ENCODE measurements at regions of chr19 and their contacts with region 1.

Region 1: GRCh38 chr19:37370880-37371661 is at the start of gene ZNF527:
- DNase-seq: peak; percentile 98
- H3K4me3 Mint-ChIP-seq: peak within 1 kb of the TSS; percentile 93
- H3K27ac Mint-ChIP-seq: peak within 1 kb of the TSS; percentile 88
- H3K4me1 Mint-ChIP-seq: peaks cover 11% of the 10 kb centered on the region
- H3K27me3 Mint-ChIP-seq: no peaks in the 10 kb centered on the region
- total RNA-seq, gene ZNF527: 3.8 to 4.4 TPM

Region 2: GRCh38 chr19:36973021-36973843 is 397.8 kb before region 1 on chr19:
- CTCF ChIA-PET with region 1: no interaction called
- POLR2A ChIA-PET with region 1: no interaction called
- intact Hi-C with region 1: loop called (anchors 2 kb)
- DNase-seq: peak; percentile 91
- H3K4me3 Mint-ChIP-seq: peak overlapping the region; percentile 89
- H3K27ac Mint-ChIP-seq: peak overlapping the region; percentile 95
- H3K4me1 Mint-ChIP-seq: peaks cover 7% of the 10 kb centered on the region
- H3K27me3 Mint-ChIP-seq: no peaks in the 10 kb centered on the region

Region 3: DNA sequence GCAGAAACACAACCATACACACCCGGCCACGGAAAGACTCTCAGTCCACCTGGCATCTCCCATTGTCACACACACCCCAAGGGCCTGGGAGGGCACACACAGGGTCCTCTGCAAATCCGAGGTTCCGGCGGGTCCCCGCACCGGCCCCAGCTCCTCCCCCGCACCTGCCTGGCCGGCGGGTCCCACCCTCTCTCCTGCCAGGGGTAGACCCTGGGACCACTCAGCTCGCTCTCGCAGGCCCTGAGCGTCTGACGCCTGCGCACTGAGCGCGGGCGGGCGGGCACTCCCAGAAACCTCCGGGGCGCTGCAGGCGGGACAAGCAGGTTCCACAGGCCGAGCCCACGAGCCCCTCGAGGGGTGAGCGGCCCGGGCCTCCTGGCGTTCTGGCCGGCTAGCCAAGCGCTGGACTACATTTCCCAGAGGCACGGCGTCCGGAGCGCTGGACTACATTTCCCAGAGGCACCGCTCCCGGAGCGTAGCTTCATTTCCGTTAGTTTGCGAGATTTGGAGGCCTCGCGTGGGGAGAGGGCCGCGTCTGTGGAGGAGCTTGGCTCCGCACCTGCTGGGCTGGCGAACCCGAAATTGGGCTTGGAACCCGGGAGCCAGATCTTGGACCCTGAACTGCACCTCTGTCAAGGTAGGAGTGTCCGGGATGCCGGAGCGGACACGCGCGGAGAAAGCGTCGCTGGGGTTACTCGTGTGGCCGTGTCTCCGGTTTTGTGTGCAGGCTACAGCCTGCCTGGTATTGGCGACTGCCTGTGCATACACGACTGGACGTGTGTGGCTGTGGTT is 292.9 kb before region 1 on chr19 and contains the start of gene ZNF420:
- CTCF ChIA-PET with region 1: no interaction called
- POLR2A ChIA-PET with region 1: no interaction called
- intact Hi-C with region 1: loop called (anchors 1 kb)
- DNase-seq: peak; percentile 93
- H3K4me3 Mint-ChIP-seq: peak within 1 kb of the TSS; percentile 94
- H3K27ac Mint-ChIP-seq: peak within 1 kb of the TSS; percentile 79
- H3K4me1 Mint-ChIP-seq: peaks cover 31% of the 10 kb centered on the region
- H3K27me3 Mint-ChIP-seq: no peaks in the 10 kb centered on the region
- total RNA-seq, gene ZNF420: 6.5 to 8.7 TPM

Region 4: DNA sequence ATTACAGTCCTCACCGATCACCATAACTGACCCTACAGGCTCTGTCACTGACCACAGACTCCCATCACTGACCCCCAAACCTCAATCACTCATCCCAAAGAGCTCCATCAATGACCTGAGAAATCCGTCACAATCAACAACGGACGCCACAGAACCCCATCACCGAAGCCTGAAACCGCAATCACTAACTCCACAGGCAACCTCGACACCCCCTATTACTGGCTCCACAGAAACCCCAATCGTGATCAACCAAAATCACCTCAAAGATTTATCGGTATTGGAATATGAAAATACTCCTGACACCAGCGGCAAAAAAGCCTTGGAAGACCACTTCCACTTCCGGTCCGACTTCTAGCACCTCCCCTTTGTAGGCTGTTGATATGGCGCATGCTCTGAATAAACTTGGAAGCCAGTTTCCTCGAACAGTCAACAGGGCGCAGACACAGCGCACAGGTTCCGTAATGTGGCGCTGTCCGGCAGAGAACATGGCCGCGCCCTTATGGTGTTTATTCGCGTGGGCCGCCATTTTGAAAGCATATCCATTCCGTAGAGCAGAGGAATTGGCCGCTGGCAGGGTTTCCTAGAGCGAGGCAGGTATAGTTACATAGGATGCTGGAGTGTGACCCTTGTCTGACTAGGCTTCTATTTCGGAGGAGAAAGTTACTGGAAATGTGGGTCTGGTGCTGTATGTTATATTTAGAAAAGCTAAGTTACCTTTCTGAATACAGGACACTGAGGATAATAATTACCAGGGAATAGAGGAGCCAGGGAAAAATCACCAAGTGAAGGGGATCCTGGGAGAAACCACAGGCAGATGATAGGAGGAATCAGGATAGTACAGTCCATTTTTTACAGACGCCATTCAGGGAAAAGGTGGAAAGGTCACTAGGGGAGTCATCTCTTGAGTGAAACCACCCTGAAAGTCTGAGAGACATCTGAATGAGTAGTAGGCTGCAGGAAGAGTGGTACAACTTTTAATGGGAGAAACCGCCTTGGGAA is 198.4 kb before region 1 on chr19 and contains the start of gene ZNF585A:
- CTCF ChIA-PET with region 1: no interaction called
- POLR2A ChIA-PET with region 1: no interaction called
- intact Hi-C with region 1: loop called (anchors 1 kb)
- DNase-seq: peak; percentile 92
- H3K4me3 Mint-ChIP-seq: no peak within 1 kb of the TSS
- H3K27ac Mint-ChIP-seq: no peak within 1 kb of the TSS
- H3K4me1 Mint-ChIP-seq: no peaks in the 10 kb centered on the region
- H3K27me3 Mint-ChIP-seq: no peaks in the 10 kb centered on the region
- total RNA-seq, gene ZNF585A: 7.5 to 11.9 TPM

Region 5: DNA sequence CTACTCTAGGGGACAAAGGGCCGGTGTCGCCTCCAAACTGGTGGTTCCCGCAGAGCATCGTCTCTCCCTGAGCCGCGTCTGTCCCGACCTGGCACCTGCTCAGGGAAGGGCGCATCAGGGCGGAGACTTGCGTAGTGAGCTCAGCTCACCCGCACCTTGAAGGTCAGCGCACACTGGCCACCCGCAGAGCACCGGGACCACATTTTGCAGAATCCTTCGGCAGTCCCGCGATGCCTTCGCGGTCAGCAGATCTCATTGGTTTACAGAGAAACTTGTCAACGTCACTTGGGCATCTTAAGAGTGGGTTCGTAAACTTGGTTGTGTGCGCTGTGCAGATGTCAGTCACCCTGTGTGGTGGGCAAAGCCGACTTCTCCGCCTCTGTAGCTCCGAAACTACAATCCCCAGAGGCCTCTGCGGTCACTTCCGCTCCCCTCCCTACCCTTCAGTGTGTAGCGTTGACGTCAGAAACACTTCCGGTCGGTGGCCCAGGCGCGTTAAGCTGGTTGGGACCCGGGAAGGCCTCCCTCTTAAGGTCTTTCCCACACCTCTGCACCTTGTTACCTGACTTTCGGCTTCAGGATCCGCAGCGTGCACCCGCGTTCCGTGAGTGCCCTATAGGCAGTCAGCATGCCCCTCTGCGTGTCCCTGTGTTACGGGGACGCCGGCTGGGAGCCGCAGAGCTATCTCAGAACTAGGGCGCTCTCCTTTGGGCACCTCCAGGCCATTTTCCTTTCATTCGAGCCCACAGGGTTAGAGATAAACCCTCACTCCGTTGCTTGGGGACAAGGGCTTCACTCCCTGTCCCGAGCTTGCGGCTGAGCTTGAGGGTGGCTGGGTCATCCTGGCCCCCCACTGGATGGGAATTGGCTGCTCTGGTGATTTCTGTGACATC is 36.6 kb before region 1 on chr19:
- CTCF ChIA-PET with region 1: no interaction called
- POLR2A ChIA-PET with region 1: interaction called, 9 read pairs
- intact Hi-C with region 1: loop called (anchors 5 kb)
- DNase-seq: peak; percentile 92
- H3K4me3 Mint-ChIP-seq: peak overlapping the region; percentile 88
- H3K27ac Mint-ChIP-seq: peak overlapping the region; percentile 78
- H3K4me1 Mint-ChIP-seq: peaks cover 23% of the 10 kb centered on the region
- H3K27me3 Mint-ChIP-seq: no peaks in the 10 kb centered on the region

Region 6: DNA sequence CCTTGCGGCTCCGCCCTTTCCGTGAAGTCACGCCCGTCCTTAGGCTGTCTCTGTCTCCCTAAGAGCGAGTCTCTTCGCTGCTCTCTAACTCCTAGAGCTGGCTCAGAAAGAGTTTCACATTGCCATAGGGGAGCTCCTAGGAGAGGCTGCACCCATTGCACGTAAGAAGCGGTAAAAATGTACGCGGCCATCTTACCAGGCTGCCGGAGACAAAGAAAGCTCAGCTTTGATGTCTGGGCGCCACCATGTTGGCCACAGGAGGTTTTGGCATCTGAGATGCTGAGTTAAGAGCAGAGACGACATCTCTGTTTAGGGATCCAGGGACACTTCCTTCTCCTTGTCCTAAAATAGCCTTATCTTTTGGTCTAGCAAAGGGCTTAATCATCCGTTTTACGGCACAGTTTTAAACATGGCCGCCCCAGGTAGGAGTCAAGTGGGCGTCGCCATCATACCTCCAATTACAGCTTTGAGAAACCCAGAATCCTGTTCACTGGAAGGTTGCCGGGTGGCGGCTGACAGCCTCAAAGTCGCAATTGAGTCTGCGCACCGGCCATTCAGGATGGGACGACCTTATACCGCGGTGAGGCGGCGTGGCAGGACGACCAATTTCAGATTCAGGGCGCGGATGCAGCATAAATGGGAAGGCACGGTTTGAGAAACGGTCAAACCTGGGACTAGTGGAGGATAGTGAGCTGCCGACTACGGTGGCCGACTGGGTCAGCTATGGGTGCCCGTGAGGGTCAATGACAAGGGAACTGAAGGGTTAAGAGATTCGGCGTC is 135.5 kb after region 1 on chr19 and contains the start of gene ZNF793:
- CTCF ChIA-PET with region 1: no interaction called
- POLR2A ChIA-PET with region 1: interaction called, 3 read pairs
- intact Hi-C with region 1: loop called (anchors 1 kb)
- DNase-seq: peak; percentile 86
- H3K4me3 Mint-ChIP-seq: no peak within 1 kb of the TSS
- H3K27ac Mint-ChIP-seq: no peak within 1 kb of the TSS
- H3K4me1 Mint-ChIP-seq: no peaks in the 10 kb centered on the region
- H3K27me3 Mint-ChIP-seq: no peaks in the 10 kb centered on the region
- total RNA-seq, gene ZNF793: 2.4 to 3.4 TPM

Region 7: DNA sequence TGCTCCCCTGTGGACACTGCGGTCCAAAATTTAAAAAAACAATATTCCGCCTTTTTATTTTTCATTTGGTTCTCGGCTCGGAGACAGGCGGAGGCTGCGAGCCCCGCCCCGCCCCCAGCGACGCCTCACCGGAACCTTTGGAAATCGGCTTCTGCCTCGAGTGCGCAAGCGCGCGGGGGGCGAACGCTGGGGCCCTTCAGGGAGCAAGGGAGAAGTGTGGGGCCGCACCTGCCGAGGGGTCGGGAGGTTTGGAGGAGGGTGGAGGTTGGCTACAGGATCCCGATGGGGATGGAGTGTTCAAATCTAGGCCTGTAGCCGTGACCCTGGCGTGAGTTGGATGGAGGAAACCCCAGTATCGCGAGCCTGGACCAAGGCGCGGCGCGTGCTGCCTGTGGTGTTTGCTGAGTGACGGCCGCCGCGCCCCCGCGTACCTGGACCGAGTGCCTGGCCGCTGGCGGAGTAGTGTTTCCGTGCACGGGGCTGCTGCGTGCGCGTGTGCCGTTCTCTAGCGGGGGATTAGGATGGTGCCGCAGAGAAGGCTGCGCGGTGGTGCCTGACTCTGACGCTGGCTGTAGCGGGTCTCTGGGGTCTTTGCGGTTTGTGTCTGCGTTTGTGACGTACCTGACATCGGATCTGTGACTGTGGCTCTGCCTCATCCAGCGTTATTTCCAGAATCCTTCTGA is 284.8 kb after region 1 on chr19:
- CTCF ChIA-PET with region 1: no interaction called
- POLR2A ChIA-PET with region 1: no interaction called
- intact Hi-C with region 1: loop called (anchors 1 kb)
- DNase-seq: peak; percentile 90
- H3K4me3 Mint-ChIP-seq: peak overlapping the region; percentile 91
- H3K27ac Mint-ChIP-seq: peak overlapping the region; percentile 95
- H3K4me1 Mint-ChIP-seq: peaks cover 27% of the 10 kb centered on the region
- H3K27me3 Mint-ChIP-seq: no peaks in the 10 kb centered on the region

Measured in activated CD4-positive, alpha-beta memory T cell treated with anti-CD3 and anti-CD28 coated beads for 36 hours (primary cell).